A549 (cell line): ENCODE measurements at regions of chr2 and their contacts with region 1.

Region 1: DNA sequence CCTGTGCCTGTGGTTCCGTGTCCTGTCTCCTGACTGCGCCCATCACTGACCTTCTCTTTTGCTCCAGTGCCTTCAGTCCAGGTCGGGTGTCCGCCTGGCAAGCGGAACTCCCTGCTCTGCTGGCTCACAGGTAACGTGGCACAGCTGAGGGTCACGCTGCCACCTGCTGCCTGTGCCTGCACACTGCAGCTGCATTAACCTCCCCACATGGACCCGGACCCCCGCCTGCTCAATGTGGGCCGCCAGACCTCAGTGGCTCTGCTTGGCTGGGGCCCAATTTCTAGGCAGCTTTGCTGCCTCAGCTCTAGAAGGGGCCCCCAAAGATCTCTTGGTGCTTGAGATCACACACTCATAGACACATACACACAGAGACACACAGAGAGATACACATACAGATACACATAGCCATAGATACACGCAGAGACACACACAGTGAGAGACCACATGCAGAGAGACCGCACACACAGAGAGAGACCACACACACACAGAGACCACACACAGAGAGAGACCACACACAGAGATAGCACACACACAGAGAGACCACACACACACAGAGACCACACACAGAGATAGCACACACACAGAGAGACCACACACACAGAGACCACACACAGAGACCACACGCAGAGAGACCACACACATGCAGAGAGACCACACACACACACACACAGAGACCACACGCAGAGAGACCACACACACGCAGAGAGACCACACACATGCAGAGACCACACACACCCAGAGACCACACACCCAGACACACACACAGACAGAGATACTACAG is 14.9 kb upstream of the CNNM3 start:
- DNase-seq: peak; percentile 68 to 72
- ATAC-seq: peak; percentile 93 to 98
- H3K4me3 ChIP-seq: no peak overlapping the region
- H3K27ac ChIP-seq: peak overlapping the region; percentile 23 to 69; a peak in 3 of 6 replicates
- H3K4me1 ChIP-seq: peaks cover 7% of the 10 kb centered on the region; the same call in 1 of the 3 replicates
- CTCF ChIP-seq: peak; percentile 83
- EP300 ChIP-seq: no peak
- POLR2A ChIP-seq: no peak
- RAD21 ChIP-seq: peak; percentile 85 to 90

Region 2: GRCh38 chr2:96783388-96783787 is 17.8 kb before region 1 on chr2:
- CTCF ChIA-PET with region 1: interaction called, 10 read pairs
- POLR2A ChIA-PET with region 1: interaction called, 4 read pairs
- DNase-seq: no peak
- ATAC-seq: no peak
- H3K4me3 ChIP-seq: no peak overlapping the region
- H3K27ac ChIP-seq: no peak overlapping the region
- H3K4me1 ChIP-seq: peaks cover 23% of the 10 kb centered on the region
- CTCF ChIP-seq: no peak
- EP300 ChIP-seq: no peak
- POLR2A ChIP-seq: no peak
- RAD21 ChIP-seq: no peak

Region 3: GRCh38 chr2:96788442-96789244 is 12.6 kb before region 1 on chr2:
- CTCF ChIA-PET with region 1: interaction called, 13 read pairs
- POLR2A ChIA-PET with region 1: interaction called, 4 read pairs
- DNase-seq: peak in 1 of 2 experiments; percentile 42
- ATAC-seq: peak; percentile 70 to 76; a peak in 5 of 6 replicates
- H3K4me3 ChIP-seq: no peak overlapping the region
- H3K27ac ChIP-seq: peak overlapping the region; percentile 36 to 85; a peak in 5 of 6 replicates
- H3K4me1 ChIP-seq: peaks cover 30% of the 10 kb centered on the region
- CTCF ChIP-seq: no peak
- EP300 ChIP-seq: no peak
- POLR2A ChIP-seq: no peak
- RAD21 ChIP-seq: no peak

Region 4: GRCh38 chr2:96816128-96816835 is 15.1 kb after region 1 on chr2 and contains the start of gene CNNM3:
- CTCF ChIA-PET with region 1: interaction called, 14 read pairs
- POLR2A ChIA-PET with region 1: interaction called, 4 read pairs
- DNase-seq: peak; percentile 93 to 96
- ATAC-seq: peak; percentile 88 to 97
- H3K4me3 ChIP-seq: peak within 1 kb of the TSS; percentile 92
- H3K27ac ChIP-seq: peak within 1 kb of the TSS; percentile 91 to 94
- H3K4me1 ChIP-seq: peaks cover 30% of the 10 kb centered on the region
- CTCF ChIP-seq: peak; percentile 27
- EP300 ChIP-seq: no peak
- POLR2A ChIP-seq: peak; percentile 68
- RAD21 ChIP-seq: no peak; a peak in 2 of 5 replicates
- polyA plus RNA-seq, gene CNNM3: 11.8 and 13.6 TPM in 2 replicates